ENCODE measurements at regions of chr15 and their contacts with region 1.

Region 1: GRCh38 chr15:75639709-75640482 is at the start of gene IMP3:
- DNase-seq: peak; percentile 93
- H3K4me3 ChIP-seq: peak within 1 kb of the TSS; percentile 90
- CTCF ChIP-seq: no peak

Region 2: GRCh38 chr15:75161917-75162414 is 477.9 kb before region 1 on chr15:
- in situ Hi-C with region 1: no loop called
- DNase-seq: no peak
- H3K4me3 ChIP-seq: no peak overlapping the region
- CTCF ChIP-seq: no peak

Region 3: DNA sequence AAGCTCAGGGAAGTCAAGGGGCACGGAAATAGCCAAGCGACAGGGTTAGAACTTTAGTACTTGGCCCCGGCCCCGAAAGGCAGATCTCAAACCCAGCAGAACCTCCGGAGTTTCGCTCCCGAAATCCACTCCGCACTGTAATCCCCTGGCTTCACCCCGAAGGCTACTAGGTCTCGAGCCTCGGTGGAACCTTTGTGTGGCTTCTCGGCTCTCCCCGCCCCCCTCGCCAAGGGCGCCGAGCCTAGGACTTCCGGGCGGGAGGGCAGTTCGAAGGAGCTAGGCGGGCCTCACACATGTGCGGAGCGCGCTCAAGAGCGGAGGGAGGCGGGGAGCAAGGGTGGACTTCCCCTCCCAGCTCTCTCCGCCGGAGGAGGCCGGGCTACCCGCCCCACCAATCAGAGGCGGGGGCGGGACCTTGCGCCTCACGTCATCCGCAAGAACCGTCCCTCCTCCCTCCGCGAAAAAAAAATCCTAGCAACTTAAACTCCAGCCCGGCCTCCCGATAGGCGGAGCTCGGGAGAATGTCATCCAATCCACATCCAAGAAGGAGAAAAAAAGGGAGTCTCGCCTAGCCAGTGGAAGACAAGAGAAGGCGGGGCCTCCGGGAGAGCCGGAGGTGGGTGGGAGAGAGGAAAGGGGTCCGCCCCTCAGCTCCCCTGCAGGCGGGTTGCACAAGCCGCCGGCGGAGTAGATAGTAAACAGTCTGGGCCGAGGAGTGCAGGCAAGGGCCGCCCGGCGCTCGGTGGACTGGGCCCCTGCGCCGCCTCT is 186.0 kb before region 1 on chr15:
- in situ Hi-C with region 1: loop called (anchors 25 kb)
- DNase-seq: peak; percentile 100
- H3K4me3 ChIP-seq: peak overlapping the region; percentile 93
- CTCF ChIP-seq: no peak

Region 4: DNA sequence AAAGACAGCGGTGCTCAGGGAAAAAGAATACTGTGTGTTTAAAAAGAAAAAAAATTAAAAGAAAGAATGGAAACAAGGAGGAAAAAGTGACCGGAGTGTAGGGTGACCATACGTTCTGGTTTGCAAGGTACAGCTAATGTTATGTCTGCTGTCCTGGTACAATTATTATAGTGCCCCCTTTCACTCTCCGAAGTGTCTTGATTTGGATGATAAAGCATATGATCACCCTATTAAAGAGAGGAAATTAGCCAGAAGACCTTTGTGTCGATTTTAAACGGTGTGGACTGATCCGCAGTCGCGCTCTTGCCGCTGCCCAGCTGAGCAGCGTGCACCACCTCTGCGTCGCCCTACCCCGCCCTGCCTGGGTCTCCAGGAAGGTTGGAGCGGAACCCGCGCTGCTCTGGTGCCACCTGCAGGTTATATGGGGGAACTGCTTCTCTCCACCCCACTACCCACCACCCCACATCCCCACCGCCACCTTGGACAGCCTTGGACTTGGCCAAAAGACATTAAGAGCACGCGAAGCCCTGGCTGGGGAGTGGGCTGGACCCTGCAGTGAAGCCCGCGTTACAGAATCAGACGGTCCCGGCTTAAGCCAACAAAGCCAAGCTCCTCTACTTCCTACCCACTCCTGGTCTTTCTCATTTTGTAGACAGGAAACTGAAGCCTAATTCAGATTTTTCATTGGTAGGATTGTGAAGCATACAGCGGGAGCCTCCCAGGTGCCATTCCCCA is 162.1 kb after region 1 on chr15:
- in situ Hi-C with region 1: loop called (anchors 25 kb)
- DNase-seq: peak; percentile 31
- H3K4me3 ChIP-seq: no peak overlapping the region
- CTCF ChIP-seq: peak; percentile 72

Measured in astrocyte of the cerebellum (primary cell).